Sigmoid colon (tissue), 7 donors: ENCODE measurements at regions of chr17 and their contacts with region 1.

Region 1: GRCh38 chr17:40443583-40444327 is 505 bp downstream of the IGFBP4 start:
- DNase-seq: peak; percentile 94
- H3K4me3 ChIP-seq: peak overlapping the region; percentile 70 to 93 (median 84)
- H3K27ac ChIP-seq: peak overlapping the region; percentile 93 to 99 (median 95)
- H3K4me1 ChIP-seq: peaks cover 0 to 53% (median 47%) of the 10 kb centered on the region in 4 donors
- H3K27me3 ChIP-seq: no peaks in the 10 kb centered on the region
- CTCF ChIP-seq: peak in 1 of 4 experiments; percentile 16
- EP300 ChIP-seq: no peak
- POLR2A ChIP-seq: no peak

Region 2: DNA sequence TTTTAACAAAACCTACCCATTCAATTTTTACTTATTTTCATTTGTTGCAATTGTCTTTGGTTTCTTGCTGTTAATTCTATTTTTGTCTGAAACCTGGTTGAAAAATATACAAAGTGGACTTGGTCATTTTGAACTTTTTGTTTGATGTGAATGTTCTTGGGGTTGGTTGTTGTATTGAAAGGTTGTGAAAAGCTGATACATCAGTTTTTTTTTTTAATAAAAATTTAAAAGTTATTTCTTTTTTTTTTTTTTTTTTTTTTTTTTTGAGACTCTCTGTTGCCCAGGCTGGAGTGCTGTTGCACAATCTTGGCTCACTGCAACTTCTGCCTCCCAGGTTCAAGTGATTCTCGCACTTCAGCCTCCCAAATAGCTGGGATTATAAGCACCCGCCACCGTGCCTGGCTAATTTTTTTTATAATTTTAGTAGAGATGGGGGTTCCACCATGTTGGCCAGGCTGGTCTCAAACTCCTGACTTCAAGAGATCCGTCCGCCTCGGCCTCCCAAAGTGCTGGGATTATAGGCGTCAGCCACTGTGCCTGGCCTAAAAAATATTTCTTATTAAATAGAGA is 195.7 kb before region 1 on chr17:
- intact Hi-C with region 1: no loop called
- DNase-seq: no peak
- H3K4me3 ChIP-seq: no peak overlapping the region
- H3K27ac ChIP-seq: peak overlapping the region in 2 of 4 donors; percentile 14 to 15
- H3K4me1 ChIP-seq: peaks cover 0 to 40% (median 35%) of the 10 kb centered on the region in 4 donors
- H3K27me3 ChIP-seq: no peaks in the 10 kb centered on the region
- CTCF ChIP-seq: no peak
- EP300 ChIP-seq: no peak
- POLR2A ChIP-seq: no peak

Region 3: GRCh38 chr17:40362696-40363110 is 81.1 kb before region 1 on chr17:
- intact Hi-C with region 1: loop called (anchors 1 kb)
- DNase-seq: peak; percentile 79
- H3K4me3 ChIP-seq: peak overlapping the region; percentile 31 to 61 (median 52)
- H3K27ac ChIP-seq: peak overlapping the region in 1 of 4 donors; percentile 31
- H3K4me1 ChIP-seq: peaks cover 0 to 31% (median 16%) of the 10 kb centered on the region in 4 donors
- H3K27me3 ChIP-seq: peaks cover 0 to 5% (median 0%) of the 10 kb centered on the region in 3 donors
- CTCF ChIP-seq: peak in 2 of 4 experiments; percentile 33 to 47
- EP300 ChIP-seq: no peak
- POLR2A ChIP-seq: no peak

Region 4: DNA sequence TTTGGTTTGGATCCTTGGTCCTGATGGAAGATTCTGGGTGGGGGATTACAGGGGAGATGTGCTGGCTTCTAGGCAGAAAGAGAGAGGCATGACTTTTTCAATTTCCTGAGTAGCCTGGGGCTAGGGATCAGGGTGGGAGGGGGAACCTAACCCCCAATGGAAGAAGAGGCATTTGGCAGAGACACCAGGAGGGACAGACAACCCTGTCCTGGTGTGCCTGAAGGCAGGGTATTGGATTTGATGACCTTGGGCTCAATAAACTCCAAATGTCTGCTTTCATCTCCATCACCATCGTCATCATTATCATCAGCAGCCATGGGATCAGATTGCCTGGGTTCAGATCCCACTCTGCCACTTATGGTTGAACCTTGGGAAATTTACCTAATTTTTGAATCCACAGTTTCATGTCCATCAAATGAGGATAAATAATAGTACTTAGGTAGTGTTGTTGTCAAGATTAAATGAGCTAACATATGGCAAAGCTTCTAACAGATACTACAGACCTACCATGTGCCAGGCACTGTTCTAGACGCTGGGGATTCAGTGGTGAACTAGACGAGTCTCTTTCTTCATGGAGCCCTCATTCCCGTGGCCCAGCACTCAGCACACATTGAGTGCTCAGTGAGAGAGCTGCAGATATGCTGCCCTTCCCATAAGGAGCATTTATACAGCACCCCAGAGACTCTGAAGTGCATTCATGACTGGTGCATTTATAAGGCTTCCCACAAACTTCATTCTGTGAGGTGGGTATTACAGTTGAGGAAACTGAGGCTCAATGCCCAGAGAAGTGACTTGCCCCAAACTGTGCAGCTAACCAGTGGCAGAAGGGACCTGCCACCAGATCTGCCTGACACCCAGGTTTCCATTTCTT is 26.3 kb after region 1 on chr17:
- intact Hi-C with region 1: no loop called
- DNase-seq: no peak
- H3K4me3 ChIP-seq: no peak overlapping the region
- H3K27ac ChIP-seq: peak overlapping the region in 3 of 4 donors; percentile 84 to 91 (median 84)
- H3K4me1 ChIP-seq: peaks cover 0 to 48% (median 47%) of the 10 kb centered on the region in 4 donors
- H3K27me3 ChIP-seq: no peaks in the 10 kb centered on the region
- CTCF ChIP-seq: no peak
- EP300 ChIP-seq: no peak
- POLR2A ChIP-seq: no peak

Region 5: GRCh38 chr17:40480501-40481003 is 36.8 kb after region 1 on chr17:
- intact Hi-C with region 1: loop called (anchors 1 kb)
- DNase-seq: no peak
- H3K4me3 ChIP-seq: no peak overlapping the region
- H3K27ac ChIP-seq: no peak overlapping the region
- H3K4me1 ChIP-seq: peaks cover 0 to 14% (median 13%) of the 10 kb centered on the region in 4 donors
- H3K27me3 ChIP-seq: no peaks in the 10 kb centered on the region
- CTCF ChIP-seq: no peak
- EP300 ChIP-seq: no peak
- POLR2A ChIP-seq: no peak

Region 6: DNA sequence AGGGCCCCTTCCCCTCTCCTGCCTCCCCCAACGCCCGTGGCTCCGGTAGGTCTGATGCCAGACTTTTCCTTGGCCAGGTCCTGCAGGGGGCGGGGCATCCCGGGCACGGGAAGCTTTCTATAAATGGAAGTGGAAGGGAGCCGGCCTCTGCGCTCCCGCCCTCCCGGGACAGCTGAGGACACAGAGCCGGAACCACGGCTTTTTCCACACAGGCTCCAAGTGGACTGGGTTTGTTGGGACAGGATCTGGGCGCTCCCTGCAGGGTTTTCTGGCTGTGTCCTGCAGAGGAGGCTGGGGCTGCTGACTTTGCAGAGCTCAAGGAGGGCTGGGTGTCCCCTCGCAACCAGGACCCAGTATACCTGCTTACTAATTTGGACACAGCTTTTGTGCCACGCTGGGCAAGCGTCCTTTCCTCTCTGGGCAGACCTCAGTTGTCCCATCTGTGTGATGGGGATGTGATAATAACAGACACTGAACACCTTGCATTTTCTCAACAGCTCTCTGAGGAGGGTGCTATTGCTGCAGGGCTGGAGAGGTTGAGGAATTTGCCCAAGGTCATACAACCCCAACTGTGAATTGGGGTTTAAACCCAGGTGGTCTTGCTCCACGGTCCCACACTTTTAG is 55.9 kb after region 1 on chr17:
- intact Hi-C with region 1: loop called (anchors 1 kb)
- DNase-seq: peak; percentile 97
- H3K4me3 ChIP-seq: peak overlapping the region in 3 of 4 donors; percentile 13 to 34 (median 17)
- H3K27ac ChIP-seq: peak overlapping the region; percentile 76 to 87 (median 86)
- H3K4me1 ChIP-seq: peaks cover 0 to 36% (median 33%) of the 10 kb centered on the region in 4 donors
- H3K27me3 ChIP-seq: no peaks in the 10 kb centered on the region
- CTCF ChIP-seq: peak in 1 of 4 experiments; percentile 16
- EP300 ChIP-seq: peak in 3 of 4 donors; percentile 2 to 76 (median 29)
- POLR2A ChIP-seq: peak; percentile 16 to 38

Region 7: DNA sequence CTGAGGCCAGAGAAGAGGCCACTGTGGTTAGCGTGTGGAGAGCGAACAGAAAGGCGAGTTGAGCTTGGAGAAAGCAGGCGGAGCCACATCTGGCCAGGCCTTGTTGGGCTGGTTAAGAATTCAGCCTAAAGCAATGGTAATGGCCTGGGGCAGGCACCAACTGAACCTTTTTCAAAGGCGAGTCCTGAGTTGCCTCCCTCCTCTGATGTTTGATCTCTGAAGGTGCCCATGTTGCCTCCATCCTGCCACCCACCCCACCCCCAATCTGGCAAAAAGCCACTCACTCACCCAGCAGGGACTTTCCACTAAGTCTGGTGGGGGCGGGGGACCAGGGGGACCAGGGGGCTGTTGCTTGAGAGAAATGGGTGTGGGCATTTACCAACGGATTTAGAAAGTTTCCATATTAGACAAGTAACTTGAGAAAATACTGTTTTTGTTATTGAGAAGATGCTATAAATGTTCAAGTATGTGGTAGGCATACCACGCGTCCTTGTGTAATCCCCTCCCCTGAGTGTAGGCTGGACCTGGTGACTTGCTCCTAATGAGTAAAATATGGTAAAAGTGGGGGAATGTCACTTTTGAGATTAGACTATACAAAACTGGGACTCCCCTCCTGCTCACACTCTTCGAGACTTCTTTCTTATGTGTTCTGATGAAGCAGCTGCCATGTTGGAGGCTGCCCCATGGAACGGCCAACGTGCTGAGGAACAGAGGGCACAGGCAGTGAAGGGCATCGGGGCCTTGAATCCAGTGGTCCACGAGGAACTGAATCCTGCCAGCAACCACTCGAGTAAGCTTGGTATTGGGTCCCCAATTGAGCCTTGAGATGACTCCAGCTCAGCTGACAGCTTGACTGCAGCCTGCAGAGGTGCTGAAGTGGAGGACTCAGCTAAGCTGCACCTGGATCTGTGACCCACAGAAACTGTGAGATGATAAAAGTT is 87.6 kb after region 1 on chr17:
- intact Hi-C with region 1: loop called (anchors 1 kb)
- DNase-seq: peak; percentile 44
- H3K4me3 ChIP-seq: no peak overlapping the region
- H3K27ac ChIP-seq: no peak overlapping the region
- H3K4me1 ChIP-seq: peaks cover 0 to 31% (median 29%) of the 10 kb centered on the region in 4 donors
- H3K27me3 ChIP-seq: no peaks in the 10 kb centered on the region
- CTCF ChIP-seq: no peak
- EP300 ChIP-seq: no peak
- POLR2A ChIP-seq: no peak

Region 8: DNA sequence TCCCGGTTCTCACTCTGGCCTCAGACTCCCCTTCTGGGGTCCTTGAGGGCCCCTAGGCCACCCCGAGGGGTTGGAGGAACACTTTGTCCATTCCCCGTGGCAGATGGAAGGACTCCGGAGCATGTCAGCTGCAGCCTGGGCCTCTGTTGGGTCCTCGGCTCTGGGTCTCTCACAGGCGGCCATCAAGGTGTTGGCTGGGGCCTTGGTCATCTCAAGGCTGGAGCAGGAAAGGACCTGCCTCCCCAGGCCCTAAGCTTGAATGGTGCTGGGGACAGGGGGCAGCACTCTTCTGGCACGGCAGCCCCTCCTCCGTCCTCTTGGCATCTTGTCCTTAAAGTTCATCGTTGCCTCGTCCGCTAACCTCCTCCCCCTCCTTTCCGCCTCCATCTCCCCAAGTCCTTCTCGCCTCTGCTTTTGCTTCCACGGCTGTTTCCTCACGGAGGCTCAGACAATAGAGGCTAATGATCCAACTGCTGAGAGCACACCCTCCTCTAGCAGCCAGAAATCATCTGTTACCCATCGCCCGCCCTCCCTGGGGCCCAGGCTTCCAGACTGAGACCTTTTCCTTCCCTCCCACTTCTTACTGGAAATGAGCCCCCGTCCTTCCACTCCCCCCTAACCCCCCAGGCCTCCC is 98.3 kb after region 1 on chr17:
- intact Hi-C with region 1: no loop called
- DNase-seq: no peak
- H3K4me3 ChIP-seq: no peak overlapping the region
- H3K27ac ChIP-seq: peak overlapping the region; percentile 83 to 89 (median 84)
- H3K4me1 ChIP-seq: peaks cover 0 to 68% (median 54%) of the 10 kb centered on the region in 4 donors
- H3K27me3 ChIP-seq: no peaks in the 10 kb centered on the region
- CTCF ChIP-seq: no peak
- EP300 ChIP-seq: no peak
- POLR2A ChIP-seq: no peak

Region 9: DNA sequence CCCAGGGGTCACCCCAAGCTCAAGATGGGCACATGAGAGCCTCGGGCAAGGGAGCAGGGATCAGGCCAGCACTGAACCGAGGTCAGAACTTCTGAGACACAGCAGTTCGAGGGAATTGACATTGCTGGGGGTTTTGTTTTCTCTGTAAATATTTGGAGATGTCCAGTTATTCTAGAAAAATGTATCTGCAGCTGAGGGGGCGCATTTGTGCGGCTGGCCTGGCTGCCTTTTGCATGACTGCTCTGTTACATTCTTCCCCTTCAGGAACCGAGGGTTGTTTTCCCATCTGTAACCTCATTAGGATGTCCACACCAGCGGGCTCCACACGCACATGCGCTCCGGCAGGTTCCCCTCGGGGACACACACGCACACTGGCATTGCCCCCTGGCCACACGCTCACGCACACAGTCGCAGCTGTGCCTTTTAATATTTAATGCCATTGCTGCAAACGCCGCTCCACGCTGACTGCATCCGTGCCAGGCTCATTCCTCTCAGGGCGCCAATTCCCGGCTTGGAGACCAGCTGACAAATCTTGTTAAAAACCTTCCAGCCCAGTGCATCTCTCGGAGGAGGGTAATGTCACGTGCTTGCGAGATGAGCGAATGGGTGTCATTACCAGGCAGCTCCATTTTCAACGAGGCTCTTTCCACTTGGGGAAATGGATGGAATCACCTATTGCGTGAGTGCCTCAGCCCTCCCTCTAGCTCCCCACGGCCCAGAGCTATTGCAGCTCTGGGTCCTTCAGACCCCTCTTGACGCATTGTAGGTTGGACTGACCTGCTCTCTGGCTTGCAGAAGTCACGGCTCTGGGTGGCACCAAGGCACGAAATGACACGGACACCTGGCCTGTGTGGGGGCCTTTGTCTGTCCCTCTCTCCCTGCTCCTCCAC is 108.4 kb after region 1 on chr17:
- intact Hi-C with region 1: loop called (anchors 5 kb)
- DNase-seq: peak; percentile 86
- H3K4me3 ChIP-seq: peak overlapping the region in 1 of 4 donors; percentile 5
- H3K27ac ChIP-seq: peak overlapping the region; percentile 74 to 90 (median 87)
- H3K4me1 ChIP-seq: peaks cover 0 to 80% (median 73%) of the 10 kb centered on the region in 4 donors
- H3K27me3 ChIP-seq: no peaks in the 10 kb centered on the region
- CTCF ChIP-seq: no peak
- EP300 ChIP-seq: peak in 1 of 4 donors; percentile 35
- POLR2A ChIP-seq: no peak

Region 10: GRCh38 chr17:40750391-40750790 is 306.6 kb after region 1 on chr17:
- intact Hi-C with region 1: no loop called
- DNase-seq: no peak
- H3K4me3 ChIP-seq: no peak overlapping the region
- H3K27ac ChIP-seq: no peak overlapping the region
- H3K4me1 ChIP-seq: no peaks in the 10 kb centered on the region
- H3K27me3 ChIP-seq: peaks cover 0 to 13% (median 0%) of the 10 kb centered on the region in 3 donors
- CTCF ChIP-seq: no peak
- EP300 ChIP-seq: no peak
- POLR2A ChIP-seq: no peak